Activated CD4-positive, alpha-beta memory T cell treated with anti-CD3 and anti-CD28 coated beads for 36 hours (primary cell): ENCODE measurements at regions of chr4 and their contacts with region 1.

Region 1: GRCh38 chr4:114435116-114435515 is 163.5 kb upstream of the UGT8 start:
- DNase-seq: no peak
- H3K4me3 Mint-ChIP-seq: no peak overlapping the region
- H3K27ac Mint-ChIP-seq: no peak overlapping the region
- H3K4me1 Mint-ChIP-seq: no peaks in the 10 kb centered on the region
- H3K27me3 Mint-ChIP-seq: peaks cover 12% of the 10 kb centered on the region

Region 2: GRCh38 chr4:114495471-114495928 is 60.4 kb after region 1 on chr4:
- CTCF ChIA-PET with region 1: no interaction called
- POLR2A ChIA-PET with region 1: no interaction called
- intact Hi-C with region 1: loop called (anchors 10 kb)
- DNase-seq: no peak
- H3K4me3 Mint-ChIP-seq: no peak overlapping the region
- H3K27ac Mint-ChIP-seq: no peak overlapping the region
- H3K4me1 Mint-ChIP-seq: no peaks in the 10 kb centered on the region
- H3K27me3 Mint-ChIP-seq: no peaks in the 10 kb centered on the region

Region 3: GRCh38 chr4:114563536-114564315 is 128.6 kb after region 1 on chr4:
- CTCF ChIA-PET with region 1: no interaction called
- POLR2A ChIA-PET with region 1: no interaction called
- intact Hi-C with region 1: no loop called
- DNase-seq: no peak
- H3K4me3 Mint-ChIP-seq: no peak overlapping the region
- H3K27ac Mint-ChIP-seq: no peak overlapping the region
- H3K4me1 Mint-ChIP-seq: no peaks in the 10 kb centered on the region
- H3K27me3 Mint-ChIP-seq: no peaks in the 10 kb centered on the region